Mucosa of descending colon (tissue), 3 donors: ENCODE measurements at regions of chr19 and their contacts with region 1.

Region 1: GRCh38 chr19:13727798-13728197 is 36.5 kb upstream of the MRI1 start:
- DNase-seq: no peak
- ATAC-seq: no peak
- H3K4me3 ChIP-seq: no peak overlapping the region
- H3K4me1 ChIP-seq: peaks cover 3% of the 10 kb centered on the region
- CTCF ChIP-seq: no peak

Region 2: DNA sequence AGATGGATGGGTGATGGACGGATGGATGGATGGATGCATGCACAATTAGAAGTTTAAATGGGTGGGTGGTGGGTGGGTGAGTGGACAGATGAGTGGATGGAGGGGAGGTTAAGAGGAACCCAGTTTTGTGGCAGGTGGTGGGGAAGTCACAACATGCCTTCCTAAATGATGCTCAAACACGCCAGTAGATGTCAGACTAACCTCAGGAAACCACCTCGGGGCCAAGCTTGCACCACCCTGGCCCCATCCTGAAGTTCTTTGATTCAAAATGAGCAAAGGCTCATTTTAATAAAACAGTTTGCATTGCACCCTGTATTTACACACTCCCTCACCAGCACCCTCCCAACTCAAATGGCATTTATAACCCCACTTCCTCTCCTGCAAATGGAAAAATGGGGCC is 130.2 kb before region 1 on chr19:
- intact Hi-C with region 1: loop called (anchors 5 to 10 kb)
- DNase-seq: peak in 1 of 3 donors; percentile 60
- ATAC-seq: peak; percentile 84
- H3K4me3 ChIP-seq: no peak overlapping the region
- H3K4me1 ChIP-seq: no peaks in the 10 kb centered on the region
- CTCF ChIP-seq: peak; percentile 27

Region 3: DNA sequence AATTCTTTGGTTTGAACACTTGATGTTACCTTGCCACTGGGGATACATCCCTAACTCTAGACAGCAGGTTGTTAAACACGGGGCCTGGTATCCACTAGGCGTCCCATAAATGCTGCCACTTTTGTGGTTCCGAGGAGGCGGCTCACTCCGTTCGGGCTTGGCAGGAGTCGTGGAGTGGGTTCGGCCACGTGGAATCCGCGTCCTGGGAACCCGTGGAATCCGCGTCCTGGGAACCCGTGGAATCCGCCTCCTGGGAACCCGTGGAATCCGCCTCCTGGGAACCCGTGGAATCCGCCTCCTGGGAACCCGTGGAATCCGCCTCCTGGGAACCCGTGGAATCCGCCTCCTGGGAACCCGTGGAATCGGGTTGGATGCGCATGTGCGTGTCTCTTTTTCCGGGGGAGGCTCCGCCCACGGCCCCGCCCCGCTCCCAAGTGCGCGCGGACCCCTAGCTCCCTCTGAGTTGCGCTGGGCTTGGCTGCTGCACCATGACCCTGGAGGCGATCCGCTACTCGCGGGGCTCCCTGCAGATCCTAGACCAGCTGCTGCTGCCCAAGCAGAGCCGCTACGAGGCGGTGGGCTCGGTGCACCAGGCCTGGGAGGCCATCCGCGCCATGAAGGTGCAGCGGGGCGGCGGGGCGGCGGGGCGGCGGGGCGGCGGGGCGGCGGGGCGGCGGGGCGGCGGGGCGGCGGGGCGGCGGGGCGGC is 36.5 kb after region 1 on chr19 and contains the start of gene MRI1:
- intact Hi-C with region 1: no loop called
- DNase-seq: peak; percentile 81 to 88 (median 87)
- ATAC-seq: peak; percentile 89
- H3K4me3 ChIP-seq: peak within 1 kb of the TSS; percentile 70
- H3K4me1 ChIP-seq: peaks cover 10% of the 10 kb centered on the region
- CTCF ChIP-seq: no peak
- total RNA-seq, gene MRI1: 24.2 to 32.4 (median 28.7) TPM